ENCODE measurements at regions of chr11 and their contacts with region 1.

Region 1: DNA sequence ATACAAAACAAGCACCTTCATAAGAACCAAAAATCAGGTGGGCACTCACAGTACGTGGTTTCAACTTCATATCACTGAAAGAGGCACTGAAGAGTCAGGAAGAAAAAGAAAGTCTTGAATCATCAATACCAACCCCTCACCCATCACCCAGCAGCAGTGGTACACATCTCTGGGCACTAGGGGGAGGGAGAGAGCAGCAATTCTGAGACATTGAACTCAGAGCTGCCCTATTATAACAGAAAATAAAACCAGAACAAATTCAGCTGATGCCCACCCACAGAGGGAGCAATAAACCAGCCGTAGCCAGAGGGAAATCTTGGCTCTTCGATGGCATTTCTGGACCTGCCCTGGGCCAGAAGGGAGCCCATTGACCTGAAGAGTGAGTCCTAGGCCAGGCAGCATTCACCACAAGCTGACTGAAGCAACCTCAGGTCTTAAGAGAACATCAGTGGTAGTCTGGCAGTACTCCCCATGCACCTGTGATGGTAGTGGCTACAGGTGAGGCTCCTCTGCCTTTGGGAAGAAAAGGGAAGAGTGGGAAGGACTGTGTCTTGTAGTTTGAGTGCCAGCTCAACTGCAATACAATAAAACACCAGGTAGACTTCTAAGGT is 42.2 kb upstream of the FAM181B start:
- DNase-seq: peak; percentile 47
- ATAC-seq: peak; percentile 98
- H3K4me3 ChIP-seq: no peak overlapping the region
- H3K27ac ChIP-seq: no peak overlapping the region
- H3K4me1 ChIP-seq: no peaks in the 10 kb centered on the region
- H3K27me3 ChIP-seq: no peaks in the 10 kb centered on the region
- CTCF ChIP-seq: peak; percentile 84
- POLR2A ChIP-seq: no peak
- RAD21 ChIP-seq: peak; percentile 69

Region 2: GRCh38 chr11:82384308-82384707 is 391.5 kb before region 1 on chr11:
- CTCF ChIA-PET with region 1: no interaction called
- POLR2A ChIA-PET with region 1: no interaction called
- dilution Hi-C with region 1: no loop called
- in situ Hi-C with region 1: no loop called
- intact Hi-C with region 1: no loop called
- DNase-seq: no peak
- ATAC-seq: no peak
- H3K4me3 ChIP-seq: no peak overlapping the region
- H3K27ac ChIP-seq: no peak overlapping the region
- H3K4me1 ChIP-seq: no peaks in the 10 kb centered on the region
- H3K27me3 ChIP-seq: no peaks in the 10 kb centered on the region
- CTCF ChIP-seq: no peak
- POLR2A ChIP-seq: no peak
- RAD21 ChIP-seq: no peak

Region 3: DNA sequence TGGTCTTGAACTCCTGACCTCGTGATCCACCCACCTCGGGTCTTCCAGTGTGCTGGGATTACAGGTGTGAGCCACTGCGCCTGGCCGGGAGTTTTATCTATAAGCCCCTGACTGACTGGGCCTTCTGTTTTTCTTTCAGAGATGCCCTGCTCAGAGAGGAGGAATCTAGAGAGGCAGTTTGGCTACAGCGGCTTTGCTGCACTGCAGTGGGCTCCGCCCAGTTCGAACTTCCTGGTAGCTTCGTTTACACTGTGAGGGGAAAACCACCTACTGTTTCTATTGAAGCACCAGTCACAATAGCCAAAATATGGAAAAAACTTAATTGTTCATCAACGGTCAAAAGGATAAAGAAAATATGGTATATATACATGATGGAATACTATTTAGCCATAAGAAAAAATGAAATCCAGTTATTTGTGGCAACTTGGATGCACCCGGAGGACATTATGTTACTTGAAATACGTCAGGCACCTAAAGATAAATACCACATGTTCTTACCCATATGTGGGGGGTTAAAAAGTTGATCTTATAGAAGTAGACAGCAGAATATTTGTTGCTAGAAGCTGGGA is 10.3 kb before region 1 on chr11:
- CTCF ChIA-PET with region 1: interaction called, 12 read pairs
- POLR2A ChIA-PET with region 1: no interaction called
- dilution Hi-C with region 1: no loop called
- in situ Hi-C with region 1: no loop called
- intact Hi-C with region 1: no loop called
- DNase-seq: no peak
- ATAC-seq: no peak
- H3K4me3 ChIP-seq: no peak overlapping the region
- H3K27ac ChIP-seq: no peak overlapping the region
- H3K4me1 ChIP-seq: no peaks in the 10 kb centered on the region
- H3K27me3 ChIP-seq: peaks cover 2% of the 10 kb centered on the region
- CTCF ChIP-seq: no peak
- POLR2A ChIP-seq: no peak
- RAD21 ChIP-seq: no peak

Region 4: GRCh38 chr11:82786836-82787235 is 11.0 kb after region 1 on chr11:
- CTCF ChIA-PET with region 1: interaction called, 11 read pairs
- POLR2A ChIA-PET with region 1: no interaction called
- dilution Hi-C with region 1: no loop called
- in situ Hi-C with region 1: no loop called
- intact Hi-C with region 1: no loop called
- DNase-seq: no peak
- ATAC-seq: no peak
- H3K4me3 ChIP-seq: no peak overlapping the region
- H3K27ac ChIP-seq: no peak overlapping the region
- H3K4me1 ChIP-seq: no peaks in the 10 kb centered on the region
- H3K27me3 ChIP-seq: peaks cover 6% of the 10 kb centered on the region; the same call in 1 of the 2 replicates
- CTCF ChIP-seq: no peak
- POLR2A ChIP-seq: no peak
- RAD21 ChIP-seq: no peak

Region 5: DNA sequence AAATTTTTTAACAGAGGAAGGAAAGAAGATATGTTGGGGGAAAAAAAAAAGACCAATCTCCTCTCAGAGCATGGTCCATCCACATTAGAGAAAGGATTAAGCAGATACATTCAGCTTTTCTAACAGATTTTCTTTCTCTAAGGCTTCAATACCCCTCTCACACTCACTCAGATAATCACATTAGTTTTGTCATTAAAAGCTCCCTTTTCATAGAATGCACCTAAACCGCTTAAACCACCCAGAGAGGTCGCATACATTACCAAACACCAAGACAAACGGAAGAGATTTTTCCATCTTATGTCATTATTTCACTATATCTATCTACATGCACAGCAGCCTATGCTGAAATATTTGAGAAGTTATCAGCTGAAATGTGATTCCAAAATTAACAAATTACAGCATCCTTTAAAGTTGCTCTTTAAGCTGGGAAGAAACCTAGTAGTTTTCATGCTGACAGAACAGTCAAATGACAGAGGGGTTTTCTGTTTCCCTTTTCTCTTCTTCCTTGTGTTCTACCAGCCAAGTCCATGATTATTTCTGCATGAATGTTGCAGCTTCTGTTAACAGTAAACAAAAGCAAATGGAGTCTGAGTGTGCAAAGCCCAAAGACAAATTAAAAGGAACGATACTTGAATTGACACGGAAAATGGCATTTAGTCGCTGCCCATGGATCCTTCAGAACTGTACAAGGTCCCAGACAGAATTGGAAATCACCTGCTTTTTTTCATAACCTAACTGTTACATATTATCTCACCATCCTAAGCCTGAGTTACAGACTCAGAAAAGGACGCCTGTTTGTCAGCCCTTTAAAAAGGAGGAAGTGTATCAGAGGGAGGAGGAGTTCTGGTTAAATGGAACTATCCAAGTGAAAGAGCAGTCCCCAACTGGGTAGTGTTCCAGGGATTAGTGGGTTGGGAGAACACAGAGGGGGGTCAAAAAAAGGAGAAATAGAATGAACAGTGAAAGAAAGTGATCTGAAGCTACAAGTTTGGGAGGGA is 69.8 kb after region 1 on chr11:
- CTCF ChIA-PET with region 1: interaction called, 13 read pairs
- POLR2A ChIA-PET with region 1: no interaction called
- dilution Hi-C with region 1: no loop called
- in situ Hi-C with region 1: no loop called
- intact Hi-C with region 1: no loop called
- DNase-seq: no peak
- ATAC-seq: no peak
- H3K4me3 ChIP-seq: no peak overlapping the region
- H3K27ac ChIP-seq: no peak overlapping the region
- H3K4me1 ChIP-seq: no peaks in the 10 kb centered on the region
- H3K27me3 ChIP-seq: no peaks in the 10 kb centered on the region
- CTCF ChIP-seq: no peak
- POLR2A ChIP-seq: no peak
- RAD21 ChIP-seq: no peak

Region 6: GRCh38 chr11:82867495-82868082 is 91.7 kb after region 1 on chr11:
- CTCF ChIA-PET with region 1: interaction called, 10 read pairs
- POLR2A ChIA-PET with region 1: no interaction called
- dilution Hi-C with region 1: no loop called
- in situ Hi-C with region 1: no loop called
- intact Hi-C with region 1: loop called (anchors 1 kb)
- DNase-seq: peak; percentile 76
- ATAC-seq: peak; percentile 21; the same call in 1 of the 2 replicates
- H3K4me3 ChIP-seq: peak overlapping the region; percentile 29; the same call in 1 of the 2 replicates
- H3K27ac ChIP-seq: no peak overlapping the region
- H3K4me1 ChIP-seq: peaks cover 5% of the 10 kb centered on the region; the same call in 1 of the 2 replicates
- H3K27me3 ChIP-seq: no peaks in the 10 kb centered on the region
- CTCF ChIP-seq: peak; percentile 71
- POLR2A ChIP-seq: no peak
- RAD21 ChIP-seq: peak; percentile 63

Region 7: GRCh38 chr11:82949352-82949751 is 173.5 kb after region 1 on chr11:
- CTCF ChIA-PET with region 1: no interaction called
- POLR2A ChIA-PET with region 1: no interaction called
- dilution Hi-C with region 1: no loop called
- in situ Hi-C with region 1: no loop called
- intact Hi-C with region 1: no loop called
- DNase-seq: no peak
- ATAC-seq: no peak
- H3K4me3 ChIP-seq: no peak overlapping the region
- H3K27ac ChIP-seq: no peak overlapping the region
- H3K4me1 ChIP-seq: no peaks in the 10 kb centered on the region
- H3K27me3 ChIP-seq: no peaks in the 10 kb centered on the region
- CTCF ChIP-seq: no peak
- POLR2A ChIP-seq: no peak
- RAD21 ChIP-seq: no peak

Region 8: GRCh38 chr11:82978422-82979099 is 202.7 kb after region 1 on chr11:
- CTCF ChIA-PET with region 1: no interaction called
- POLR2A ChIA-PET with region 1: no interaction called
- dilution Hi-C with region 1: no loop called
- in situ Hi-C with region 1: no loop called
- intact Hi-C with region 1: no loop called
- DNase-seq: peak; percentile 90
- ATAC-seq: peak; percentile 62
- H3K4me3 ChIP-seq: no peak overlapping the region
- H3K27ac ChIP-seq: no peak overlapping the region
- H3K4me1 ChIP-seq: peaks cover 3% of the 10 kb centered on the region
- H3K27me3 ChIP-seq: no peaks in the 10 kb centered on the region
- CTCF ChIP-seq: no peak
- POLR2A ChIP-seq: no peak
- RAD21 ChIP-seq: no peak

Measured in IMR-90 (cell line).